ENCODE measurements at regions of chr13 and their contacts with region 1.

Region 1: GRCh38 chr13:48303359-48304142 is at the start of gene RB1:
- DNase-seq: peak; percentile 92
- H3K4me3 Mint-ChIP-seq: peak within 1 kb of the TSS; percentile 87
- H3K27ac Mint-ChIP-seq: peak within 1 kb of the TSS; percentile 97
- H3K4me1 Mint-ChIP-seq: peaks cover 23% of the 10 kb centered on the region
- H3K27me3 Mint-ChIP-seq: no peaks in the 10 kb centered on the region
- total RNA-seq, gene RB1: 25.1 to 25.6 TPM

Region 2: GRCh38 chr13:48094781-48095502 is 208.6 kb before region 1 on chr13 and contains the start of gene MED4:
- CTCF ChIA-PET with region 1: interaction called, 3 read pairs
- intact Hi-C with region 1: loop called (anchors 1 kb)
- DNase-seq: peak; percentile 97
- H3K4me3 Mint-ChIP-seq: peak within 1 kb of the TSS; percentile 91
- H3K27ac Mint-ChIP-seq: peak within 1 kb of the TSS; percentile 80
- H3K4me1 Mint-ChIP-seq: peaks cover 33% of the 10 kb centered on the region
- H3K27me3 Mint-ChIP-seq: no peaks in the 10 kb centered on the region
- total RNA-seq, gene MED4: 45.8 to 50.1 TPM

Region 3: GRCh38 chr13:48155848-48156247 is 147.7 kb before region 1 on chr13:
- CTCF ChIA-PET with region 1: no interaction called
- intact Hi-C with region 1: loop called (anchors 1 kb)
- DNase-seq: peak; percentile 44
- H3K4me3 Mint-ChIP-seq: peak overlapping the region; percentile 74
- H3K27ac Mint-ChIP-seq: peak overlapping the region; percentile 99
- H3K4me1 Mint-ChIP-seq: peaks cover 85% of the 10 kb centered on the region
- H3K27me3 Mint-ChIP-seq: no peaks in the 10 kb centered on the region

Region 4: DNA sequence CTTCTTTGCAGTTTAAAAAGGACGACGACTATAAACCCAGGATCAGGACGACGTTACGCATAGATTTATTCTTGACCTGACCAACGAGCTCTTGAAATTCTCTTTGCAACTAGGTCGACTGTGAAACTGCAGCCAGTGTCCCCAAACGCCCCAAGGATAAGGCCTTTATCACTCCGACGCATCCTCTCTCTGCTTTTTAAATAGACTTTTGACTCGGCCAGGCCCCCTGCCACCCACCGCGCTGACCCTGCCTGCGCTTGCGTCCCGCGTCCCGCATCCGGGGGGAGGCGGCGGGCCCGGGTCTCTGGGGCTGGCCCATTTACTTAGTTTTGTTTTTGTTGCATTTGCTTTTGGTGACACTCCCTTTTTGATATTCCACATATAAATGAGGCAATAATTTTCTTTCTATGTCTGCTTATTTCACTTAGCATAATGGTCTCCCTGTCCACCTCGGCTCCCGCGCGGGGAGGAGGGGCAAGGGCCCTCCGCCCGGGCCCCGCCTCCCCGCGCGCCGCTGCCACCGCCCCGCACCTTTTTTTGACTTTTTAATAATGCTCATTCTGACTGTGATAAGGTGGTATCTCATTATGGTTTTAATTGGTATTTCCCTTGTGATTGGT is 17.4 kb after region 1 on chr13:
- CTCF ChIA-PET with region 1: interaction called, 3 read pairs
- intact Hi-C with region 1: loop called (anchors 1 kb)
- DNase-seq: no peak
- H3K4me3 Mint-ChIP-seq: peak overlapping the region; percentile 78
- H3K27ac Mint-ChIP-seq: no peak overlapping the region
- H3K4me1 Mint-ChIP-seq: peaks cover 21% of the 10 kb centered on the region
- H3K27me3 Mint-ChIP-seq: no peaks in the 10 kb centered on the region

Region 5: GRCh38 chr13:48505597-48506091 is 202.1 kb after region 1 on chr13:
- CTCF ChIA-PET with region 1: no interaction called
- intact Hi-C with region 1: loop called (anchors 1 kb)
- DNase-seq: peak; percentile 70
- H3K4me3 Mint-ChIP-seq: peak overlapping the region; percentile 59
- H3K27ac Mint-ChIP-seq: peak overlapping the region; percentile 75
- H3K4me1 Mint-ChIP-seq: peaks cover 56% of the 10 kb centered on the region
- H3K27me3 Mint-ChIP-seq: no peaks in the 10 kb centered on the region